Calu3 (cell line): ENCODE measurements at regions of chr20 and their contacts with region 1.

Region 1: DNA sequence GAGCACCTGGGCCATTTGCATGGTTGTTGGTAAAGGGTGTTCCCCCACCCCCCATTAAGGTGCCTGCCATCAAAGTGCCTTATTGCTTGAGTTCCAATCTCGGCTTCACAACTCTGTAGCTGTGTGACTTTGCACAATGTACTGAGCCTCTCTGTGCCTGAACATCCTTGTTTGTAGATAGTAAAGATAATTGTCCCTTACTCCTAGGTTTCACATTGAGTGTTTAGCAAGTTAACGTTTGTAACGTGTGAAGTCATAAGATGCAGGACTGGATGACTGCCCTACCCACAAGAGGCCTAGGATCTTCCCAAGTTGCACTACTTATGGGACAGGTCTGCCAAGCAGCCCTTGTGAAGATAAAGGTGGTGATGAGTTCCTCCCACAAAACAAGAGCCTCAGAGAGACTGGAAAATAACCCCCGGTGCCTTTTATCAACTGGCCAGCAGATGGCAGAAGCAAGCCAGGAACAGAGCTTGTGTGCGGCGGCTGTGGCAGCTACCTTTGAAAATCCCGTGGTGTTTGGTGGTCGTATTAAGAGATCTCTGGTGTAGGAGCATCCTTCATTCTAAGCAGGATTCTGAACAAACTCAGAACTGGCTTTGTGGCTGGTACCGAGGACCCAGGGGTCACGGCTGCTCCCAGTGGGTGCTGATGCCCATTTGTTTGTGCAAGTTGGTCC is 99.0 kb downstream of the CDH26 start:
- DNase-seq: peak; percentile 67
- H3K4me3 Mint-ChIP-seq: no peak overlapping the region
- H3K27ac Mint-ChIP-seq: no peak overlapping the region
- H3K4me1 Mint-ChIP-seq: peaks cover 20% of the 10 kb centered on the region
- H3K27me3 Mint-ChIP-seq: peaks cover 76% of the 10 kb centered on the region
- CTCF ChIP-seq: peak; percentile 69

Region 2: GRCh38 chr20:59948828-59949720 is 108.2 kb before region 1 on chr20:
- CTCF ChIA-PET with region 1: no interaction called
- intact Hi-C with region 1: no loop called
- DNase-seq: peak; percentile 48
- H3K4me3 Mint-ChIP-seq: no peak overlapping the region
- H3K27ac Mint-ChIP-seq: no peak overlapping the region
- H3K4me1 Mint-ChIP-seq: peaks cover 14% of the 10 kb centered on the region
- H3K27me3 Mint-ChIP-seq: no peaks in the 10 kb centered on the region
- CTCF ChIP-seq: peak; percentile 57

Region 3: DNA sequence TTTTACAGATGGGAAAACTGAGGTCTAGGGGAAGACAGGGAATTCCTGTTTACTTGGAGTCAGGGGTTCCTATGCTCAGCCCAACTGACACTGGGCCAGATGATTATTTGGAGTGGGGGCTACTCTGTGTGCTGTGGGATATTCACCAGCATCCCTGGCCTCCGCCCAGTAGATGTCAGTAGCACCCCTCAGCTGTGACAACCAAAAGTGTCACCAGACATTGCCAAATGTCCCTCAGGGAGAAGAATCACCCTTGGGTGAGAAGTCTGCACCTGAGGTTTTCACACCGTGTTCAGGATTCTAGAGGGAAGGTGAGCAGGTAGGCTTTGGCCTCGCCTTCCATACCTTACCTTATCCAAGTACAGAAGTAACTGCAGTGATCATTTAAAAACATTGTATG is 71.4 kb before region 1 on chr20:
- CTCF ChIA-PET with region 1: no interaction called
- intact Hi-C with region 1: no loop called
- DNase-seq: peak; percentile 44
- H3K4me3 Mint-ChIP-seq: no peak overlapping the region
- H3K27ac Mint-ChIP-seq: no peak overlapping the region
- H3K4me1 Mint-ChIP-seq: peaks cover 20% of the 10 kb centered on the region
- H3K27me3 Mint-ChIP-seq: no peaks in the 10 kb centered on the region
- CTCF ChIP-seq: peak; percentile 39

Region 4: GRCh38 chr20:60210779-60211617 is 153.7 kb after region 1 on chr20:
- CTCF ChIA-PET with region 1: interaction called, 4 read pairs
- intact Hi-C with region 1: loop called (anchors 2 kb)
- DNase-seq: peak; percentile 74
- H3K4me3 Mint-ChIP-seq: no peak overlapping the region
- H3K27ac Mint-ChIP-seq: no peak overlapping the region
- H3K4me1 Mint-ChIP-seq: no peaks in the 10 kb centered on the region
- H3K27me3 Mint-ChIP-seq: peaks cover 13% of the 10 kb centered on the region
- CTCF ChIP-seq: peak; percentile 87

Region 5: DNA sequence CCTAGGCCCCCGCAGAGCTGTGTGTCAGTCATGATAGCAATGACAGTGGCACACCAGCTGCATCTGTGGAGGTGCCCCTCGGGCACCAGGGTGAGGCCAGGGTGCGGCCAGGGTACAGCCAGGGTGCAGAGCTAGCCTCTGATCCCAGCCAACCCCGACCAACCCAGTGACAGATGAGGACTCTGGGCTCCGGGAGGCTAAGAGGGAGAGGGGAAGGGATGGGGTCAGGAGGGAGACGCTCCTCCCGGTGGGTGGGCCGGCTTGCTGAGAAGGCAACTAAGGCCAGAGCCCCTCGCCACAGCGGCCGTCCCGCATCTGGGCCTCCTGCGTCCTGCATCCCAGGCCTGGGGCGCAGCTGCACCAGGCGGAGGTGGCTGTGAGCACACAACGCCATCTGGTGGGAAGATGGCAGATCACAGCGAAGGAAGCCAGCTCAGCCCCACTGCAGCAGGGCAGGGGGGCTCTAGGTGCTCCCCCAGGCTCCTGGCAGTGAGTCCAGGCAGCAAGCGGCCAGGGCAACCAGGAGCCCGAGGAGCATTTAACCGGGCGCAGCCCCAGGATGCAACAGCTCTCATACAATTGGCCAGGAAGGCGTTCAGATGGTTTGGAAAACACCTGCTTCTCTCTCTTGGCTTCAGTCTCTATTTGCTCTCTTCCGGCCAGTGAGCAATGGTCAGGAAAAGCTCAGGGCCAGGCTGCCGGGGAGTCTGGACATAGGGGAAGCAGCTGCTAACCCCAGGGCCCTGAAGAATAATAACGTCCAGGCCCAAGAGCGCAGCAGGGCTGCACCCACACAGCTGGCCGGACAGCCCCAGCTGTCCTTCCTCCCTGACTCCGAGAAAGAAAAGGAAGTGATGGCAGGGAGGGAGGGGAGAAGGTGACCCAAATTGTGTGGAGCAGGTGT is 1839.0 kb after region 1 on chr20:
- CTCF ChIA-PET with region 1: interaction called, 10 read pairs
- intact Hi-C with region 1: loop called (anchors 5 kb)
- DNase-seq: peak; percentile 73
- H3K4me3 Mint-ChIP-seq: no peak overlapping the region
- H3K27ac Mint-ChIP-seq: no peak overlapping the region
- H3K4me1 Mint-ChIP-seq: no peaks in the 10 kb centered on the region
- H3K27me3 Mint-ChIP-seq: peaks cover 98% of the 10 kb centered on the region
- CTCF ChIP-seq: peak; percentile 93